Esophagus muscularis mucosa (tissue), 4 donors: ENCODE measurements at regions of chr1 and their contacts with region 1.

Region 1: GRCh38 chr1:182962554-182963115 is 9.7 kb upstream of the SHCBP1L start:
- DNase-seq: peak; percentile 93
- H3K4me3 ChIP-seq: peak overlapping the region; percentile 27 to 41 (median 33)
- H3K27ac ChIP-seq: peak overlapping the region; percentile 42 to 68 (median 60)
- H3K4me1 ChIP-seq: peaks cover 0 to 9% (median 7%) of the 10 kb centered on the region in 4 donors
- H3K27me3 ChIP-seq: no peaks in the 10 kb centered on the region
- CTCF ChIP-seq: peak; percentile 88 to 97 (median 90)
- EP300 ChIP-seq: no peak
- POLR2A ChIP-seq: no peak

Region 2: DNA sequence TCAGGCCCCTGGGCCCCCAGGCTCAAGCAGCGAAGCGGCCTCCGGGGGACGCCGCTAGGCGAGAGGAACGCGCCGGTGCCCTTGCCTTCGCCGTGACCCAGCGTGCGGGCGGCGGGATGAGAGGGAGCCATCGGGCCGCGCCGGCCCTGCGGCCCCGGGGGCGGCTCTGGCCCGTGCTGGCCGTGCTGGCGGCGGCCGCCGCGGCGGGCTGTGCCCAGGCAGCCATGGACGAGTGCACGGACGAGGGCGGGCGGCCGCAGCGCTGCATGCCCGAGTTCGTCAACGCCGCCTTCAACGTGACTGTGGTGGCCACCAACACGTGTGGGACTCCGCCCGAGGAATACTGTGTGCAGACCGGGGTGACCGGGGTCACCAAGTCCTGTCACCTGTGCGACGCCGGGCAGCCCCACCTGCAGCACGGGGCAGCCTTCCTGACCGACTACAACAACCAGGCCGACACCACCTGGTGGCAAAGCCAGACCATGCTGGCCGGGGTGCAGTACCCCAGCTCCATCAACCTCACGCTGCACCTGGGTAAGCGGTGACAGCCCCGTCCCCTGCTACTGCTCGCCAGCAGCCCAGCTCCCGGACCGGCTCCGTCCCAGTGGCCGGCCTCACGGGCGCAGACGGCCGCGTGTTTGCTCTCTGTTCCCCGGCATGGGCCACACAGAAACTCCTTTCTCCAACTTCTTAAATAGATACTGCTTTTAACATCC is 61.1 kb after region 1 on chr1:
- intact Hi-C with region 1: loop called (anchors 2 kb)
- DNase-seq: no peak
- H3K4me3 ChIP-seq: peak overlapping the region; percentile 80 to 97 (median 92)
- H3K27ac ChIP-seq: peak overlapping the region; percentile 98 to 100 (median 100)
- H3K4me1 ChIP-seq: peaks cover 28 to 52% (median 48%) of the 10 kb centered on the region in 4 donors
- H3K27me3 ChIP-seq: no peaks in the 10 kb centered on the region
- CTCF ChIP-seq: peak; percentile 43 to 53 (median 44)
- EP300 ChIP-seq: no peak
- POLR2A ChIP-seq: peak; percentile 25

Region 3: GRCh38 chr1:183139281-183139942 is 176.8 kb after region 1 on chr1:
- intact Hi-C with region 1: loop called (anchors 5 kb)
- DNase-seq: no peak
- H3K4me3 ChIP-seq: no peak overlapping the region
- H3K27ac ChIP-seq: peak overlapping the region; percentile 78 to 81 (median 80)
- H3K4me1 ChIP-seq: peaks cover 30 to 80% (median 78%) of the 10 kb centered on the region in 4 donors
- H3K27me3 ChIP-seq: no peaks in the 10 kb centered on the region
- CTCF ChIP-seq: no peak
- EP300 ChIP-seq: no peak
- POLR2A ChIP-seq: no peak

Region 4: DNA sequence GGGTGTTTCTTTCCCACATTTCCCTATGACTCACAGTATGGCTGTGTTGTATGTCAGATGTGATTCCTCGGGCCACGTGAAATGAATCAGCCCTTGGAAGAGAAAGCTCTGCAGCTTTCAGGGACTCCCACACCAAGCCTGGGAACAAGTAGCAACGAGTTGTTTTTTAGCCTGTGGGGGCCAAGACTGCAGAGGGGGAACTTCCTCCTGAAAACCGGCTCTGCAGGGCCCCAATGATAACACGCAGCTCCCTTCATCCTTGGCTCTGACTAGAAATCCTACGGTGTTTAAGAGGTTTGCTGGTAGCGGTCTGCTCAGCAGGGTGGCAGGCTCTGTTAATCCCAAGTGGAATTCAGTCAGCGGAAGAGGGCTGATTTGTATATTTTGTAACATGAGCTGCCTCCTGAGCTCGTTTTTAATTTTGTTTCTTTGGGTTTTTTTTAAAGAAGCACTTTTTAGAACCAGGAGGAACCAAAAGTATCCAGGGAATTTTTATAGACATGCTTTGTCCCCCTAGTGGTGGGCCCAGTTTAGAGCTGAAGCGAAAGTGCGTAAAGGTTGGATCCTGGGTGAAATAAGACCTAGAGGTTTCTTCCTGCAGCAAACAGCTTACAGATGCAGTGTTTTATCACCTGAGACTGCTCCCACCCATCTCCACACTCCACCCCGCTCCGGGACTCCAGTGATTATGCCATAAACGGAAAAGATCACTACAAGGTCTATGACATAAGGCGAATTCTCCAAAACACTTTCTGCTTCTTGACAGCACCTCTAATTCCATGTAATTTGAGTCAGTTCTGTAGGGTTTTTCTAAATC is 272.2 kb after region 1 on chr1:
- intact Hi-C with region 1: loop called (anchors 2 kb)
- DNase-seq: peak; percentile 93
- H3K4me3 ChIP-seq: peak overlapping the region; percentile 36 to 48 (median 45)
- H3K27ac ChIP-seq: peak overlapping the region; percentile 78 to 86 (median 84)
- H3K4me1 ChIP-seq: peaks cover 10 to 43% (median 38%) of the 10 kb centered on the region in 4 donors
- H3K27me3 ChIP-seq: no peaks in the 10 kb centered on the region
- CTCF ChIP-seq: peak; percentile 72 to 81 (median 73)
- EP300 ChIP-seq: no peak
- POLR2A ChIP-seq: no peak

Region 5: DNA sequence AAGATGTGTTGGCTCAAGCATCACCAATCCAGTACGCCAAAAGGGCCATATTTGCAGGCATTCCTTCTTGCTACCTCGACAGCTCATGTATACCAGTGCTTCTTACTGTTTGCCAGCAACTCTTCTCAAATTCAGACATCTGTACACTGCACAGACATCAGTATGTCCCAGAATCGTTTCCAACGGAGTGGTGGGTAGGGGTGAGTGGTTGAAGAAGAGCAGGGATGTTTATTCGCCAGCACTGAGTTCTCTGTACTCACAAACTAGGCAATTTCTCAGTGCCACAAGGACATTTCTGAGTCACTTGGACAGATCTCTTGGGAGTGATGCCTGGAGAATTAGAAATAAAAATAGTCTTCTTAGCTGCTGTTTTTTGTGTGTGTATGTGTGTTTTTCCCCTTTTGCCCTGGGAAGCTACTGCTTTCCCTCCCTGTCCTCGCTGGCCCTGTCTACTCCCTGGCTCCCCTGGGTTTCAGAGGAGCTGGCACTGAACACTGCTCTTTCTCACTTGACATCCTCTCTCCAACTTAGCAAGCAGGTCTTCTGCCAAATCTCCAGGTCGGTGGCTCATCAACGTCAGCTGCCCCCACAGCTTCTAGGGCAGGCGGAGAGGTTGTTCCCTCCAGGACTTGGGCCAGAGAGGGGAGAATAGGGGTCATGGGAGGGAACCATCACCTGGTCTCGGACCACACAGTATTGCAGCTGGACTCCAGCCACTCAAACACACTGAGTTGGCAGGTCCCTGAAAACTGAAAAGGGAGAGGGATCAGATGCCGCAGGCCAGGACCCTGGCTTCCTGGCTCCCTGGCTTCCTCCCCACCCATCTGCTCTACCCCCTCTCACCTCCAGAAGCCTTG is 365.0 kb after region 1 on chr1:
- intact Hi-C with region 1: loop called (anchors 10 kb)
- DNase-seq: no peak
- H3K4me3 ChIP-seq: no peak overlapping the region
- H3K27ac ChIP-seq: peak overlapping the region; percentile 74 to 88 (median 83)
- H3K4me1 ChIP-seq: peaks cover 14 to 58% (median 54%) of the 10 kb centered on the region in 4 donors
- H3K27me3 ChIP-seq: no peaks in the 10 kb centered on the region
- CTCF ChIP-seq: no peak
- EP300 ChIP-seq: peak; percentile 2
- POLR2A ChIP-seq: no peak